ENCODE measurements at regions of chr4 and their contacts with region 1.

Region 1: DNA sequence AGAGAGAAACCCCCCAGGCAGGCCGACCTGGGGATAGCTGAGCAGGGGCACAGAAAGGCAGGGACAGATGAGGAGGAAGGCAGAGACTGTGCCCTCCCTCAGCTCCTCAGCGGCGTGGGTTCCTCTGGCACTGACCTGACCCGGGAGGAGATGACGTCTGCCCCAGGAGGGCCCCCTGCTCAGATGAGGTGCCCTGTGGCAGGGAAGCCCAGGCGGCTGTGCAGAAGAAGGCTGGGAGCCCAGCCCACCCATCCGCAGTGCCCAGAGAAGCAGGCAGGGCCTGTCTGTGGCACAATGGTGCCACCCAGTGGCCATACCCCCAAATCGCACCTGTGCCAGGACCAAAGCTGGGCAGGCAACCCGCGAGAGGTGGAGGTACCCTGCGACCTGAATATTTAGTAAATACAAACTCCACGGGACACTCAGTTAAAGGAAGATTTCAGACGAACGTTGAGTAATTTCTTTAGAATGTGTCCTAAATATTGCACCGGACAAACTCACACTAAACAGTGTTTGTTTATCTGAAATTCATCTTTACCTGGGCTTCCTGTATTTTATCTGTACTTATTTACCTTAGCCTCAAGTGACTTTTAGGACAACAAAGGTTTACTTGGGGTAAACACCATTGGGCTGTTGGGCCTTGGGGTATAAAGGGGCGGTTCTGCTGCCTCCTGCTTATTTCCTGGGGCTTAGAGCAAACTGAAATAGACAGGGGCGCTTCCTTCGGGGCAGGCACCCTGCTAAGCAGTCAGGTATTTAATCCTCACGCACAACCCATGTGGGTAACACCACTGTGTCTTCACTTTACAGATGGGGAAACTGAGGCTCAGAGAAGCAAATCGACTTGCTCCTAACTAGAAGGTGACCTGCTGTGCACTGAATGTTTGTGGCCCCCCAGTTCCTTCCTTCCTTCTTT is 46.5 kb upstream of the HMX1 start:
- DNase-seq: peak; percentile 19
- H3K4me3 ChIP-seq: no peak overlapping the region
- H3K27ac ChIP-seq: no peak overlapping the region
- H3K4me1 ChIP-seq: no peaks in the 10 kb centered on the region
- H3K27me3 ChIP-seq: no peaks in the 10 kb centered on the region
- CTCF ChIP-seq: peak; percentile 68 to 91

Region 2: DNA sequence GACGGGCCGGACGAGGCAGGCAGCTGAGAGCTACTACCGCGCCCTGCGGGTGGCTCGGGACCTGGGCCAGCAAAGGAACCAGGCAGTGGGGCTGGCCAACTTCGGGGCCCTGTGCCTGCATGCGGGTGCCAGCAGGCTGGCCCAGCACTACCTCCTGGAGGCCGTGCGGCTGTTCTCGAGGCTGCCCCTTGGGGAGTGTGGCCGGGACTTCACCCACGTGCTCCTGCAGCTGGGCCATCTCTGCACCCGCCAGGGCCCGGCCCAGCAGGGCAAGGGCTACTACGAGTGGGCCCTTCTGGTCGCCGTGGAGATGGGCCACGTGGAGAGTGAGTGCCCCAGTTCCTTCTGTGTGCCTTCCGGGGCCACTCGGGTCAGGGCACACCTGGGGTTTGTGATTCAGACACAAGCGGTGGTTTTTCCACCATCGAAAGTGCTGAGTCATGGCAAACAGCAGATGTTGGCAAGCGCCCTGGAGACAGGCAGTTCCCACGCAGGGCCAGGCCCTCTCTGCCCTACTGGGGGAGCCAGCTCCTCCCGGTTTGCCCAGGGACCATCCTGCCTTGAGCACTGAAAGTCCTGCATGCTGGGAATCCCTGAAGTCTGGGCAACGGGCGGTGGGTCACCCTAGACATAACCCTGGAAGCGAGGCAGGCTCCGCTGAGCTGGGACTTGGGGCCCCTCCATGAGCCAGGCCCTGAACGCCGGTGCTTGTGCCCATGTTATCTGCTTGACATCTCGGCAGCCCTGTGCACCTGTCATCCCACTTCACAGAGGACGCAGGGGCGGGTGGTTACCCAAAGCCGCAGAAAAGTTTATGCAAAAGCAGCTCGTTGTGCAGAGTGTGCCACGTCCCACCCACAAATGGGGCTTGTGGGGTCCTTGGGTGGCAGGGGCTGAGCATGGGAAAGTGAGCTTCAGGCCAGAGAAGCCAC is 689.5 kb before region 1 on chr4:
- CTCF ChIA-PET with region 1: no interaction called
- dilution Hi-C with region 1: no loop called
- in situ Hi-C with region 1: no loop called
- intact Hi-C with region 1: no loop called
- DNase-seq: peak; percentile 95
- H3K4me3 ChIP-seq: no peak overlapping the region
- H3K27ac ChIP-seq: peak overlapping the region; percentile 54
- H3K4me1 ChIP-seq: peaks cover 19% of the 10 kb centered on the region
- H3K27me3 ChIP-seq: no peaks in the 10 kb centered on the region
- CTCF ChIP-seq: peak in 1 of 2 donors; percentile 7

Region 3: DNA sequence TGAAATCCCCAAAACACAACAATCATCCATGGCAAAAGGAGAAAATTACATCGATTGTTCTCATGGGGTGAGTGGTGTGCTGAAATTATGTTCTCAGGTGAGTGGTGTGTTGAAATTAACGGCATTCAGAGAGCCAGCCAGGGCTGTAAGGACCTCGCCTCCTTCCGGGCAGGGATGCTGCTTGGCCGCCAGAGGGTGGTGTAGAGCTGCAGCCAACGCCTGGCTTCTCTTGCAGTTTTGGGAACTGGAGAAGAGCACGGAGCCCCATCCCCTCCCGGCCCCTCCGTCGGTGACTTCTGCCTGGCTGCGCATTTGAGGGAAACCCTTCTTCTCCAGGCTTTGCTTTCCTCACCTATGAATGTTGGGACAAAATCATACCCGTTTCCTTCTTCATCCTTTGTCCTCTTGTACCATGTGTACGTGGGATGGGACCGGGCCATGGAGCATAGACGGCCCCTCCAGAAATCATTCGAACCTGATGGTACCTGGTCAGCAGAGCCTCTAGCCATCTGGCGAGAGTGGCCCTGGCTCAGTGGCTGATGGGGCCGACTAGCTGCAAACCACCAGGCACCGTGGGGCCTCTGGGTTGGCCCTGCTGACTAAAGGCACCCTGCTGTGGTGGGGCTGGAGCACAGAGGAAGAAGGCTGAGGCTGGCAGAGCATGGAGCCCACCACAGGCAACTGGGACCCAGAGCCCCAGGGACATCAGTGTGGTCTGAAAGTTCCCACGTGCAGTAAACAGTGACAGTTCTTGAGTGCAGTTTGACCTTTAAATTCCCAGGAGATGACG is 449.2 kb before region 1 on chr4:
- CTCF ChIA-PET with region 1: no interaction called
- dilution Hi-C with region 1: no loop called
- in situ Hi-C with region 1: loop called in 1 of 2 experiments (anchors 25 kb)
- intact Hi-C with region 1: loop called (anchors 5 kb)
- DNase-seq: peak; percentile 39
- H3K4me3 ChIP-seq: no peak overlapping the region
- H3K27ac ChIP-seq: no peak overlapping the region
- H3K4me1 ChIP-seq: no peaks in the 10 kb centered on the region
- H3K27me3 ChIP-seq: no peaks in the 10 kb centered on the region
- CTCF ChIP-seq: peak; percentile 95 to 98

Region 4: GRCh38 chr4:8571702-8572596 is 346.2 kb before region 1 on chr4:
- CTCF ChIA-PET with region 1: no interaction called
- dilution Hi-C with region 1: loop called (anchors 10 kb)
- in situ Hi-C with region 1: no loop called
- intact Hi-C with region 1: no loop called
- DNase-seq: no peak
- H3K4me3 ChIP-seq: no peak overlapping the region
- H3K27ac ChIP-seq: no peak overlapping the region
- H3K4me1 ChIP-seq: no peaks in the 10 kb centered on the region
- H3K27me3 ChIP-seq: no peaks in the 10 kb centered on the region
- CTCF ChIP-seq: no peak

Region 5: DNA sequence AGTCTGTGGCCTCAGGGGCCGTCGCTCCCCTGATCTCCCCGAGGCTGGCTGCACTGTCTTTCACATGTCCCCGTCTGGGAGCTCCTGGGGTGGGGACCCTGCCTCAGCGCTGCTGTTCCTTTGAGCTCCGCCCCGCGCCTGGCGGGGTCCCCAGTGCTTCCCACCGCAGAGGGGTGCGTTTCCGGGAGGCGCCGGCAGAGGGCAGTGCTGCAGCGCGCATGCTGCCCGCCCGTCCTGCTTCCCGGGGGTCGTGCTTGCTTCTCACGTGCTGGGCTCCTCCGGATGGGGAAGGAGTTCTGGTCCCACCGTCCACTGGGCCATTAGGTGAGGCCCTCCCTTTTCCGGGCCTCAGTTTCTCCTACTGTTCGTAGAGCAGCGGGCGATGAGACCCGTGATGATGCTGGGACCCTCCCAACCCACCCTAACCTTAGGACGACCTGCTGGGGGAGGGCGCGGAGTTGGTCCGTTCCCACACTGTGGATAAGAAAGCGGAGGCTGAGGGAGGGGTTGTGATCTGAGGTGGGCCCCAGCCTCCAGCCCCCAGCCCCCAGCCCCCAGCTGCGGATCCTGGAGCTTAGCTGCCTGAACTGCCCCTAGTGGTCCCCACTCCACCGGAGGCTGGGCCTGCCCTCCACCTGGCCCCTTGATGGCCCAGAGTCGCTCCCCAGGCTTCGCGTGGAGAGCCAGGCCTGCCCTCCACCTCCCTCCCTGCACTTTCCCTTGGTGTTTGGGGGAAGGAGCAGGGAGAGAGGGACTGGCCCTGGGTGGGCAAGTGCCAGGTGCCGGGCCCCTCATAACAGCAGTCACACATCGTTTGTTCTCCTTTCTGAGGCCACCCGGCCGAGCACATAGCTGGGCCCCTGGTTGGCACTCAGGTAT is 310.3 kb before region 1 on chr4:
- CTCF ChIA-PET with region 1: no interaction called
- dilution Hi-C with region 1: no loop called
- in situ Hi-C with region 1: loop called (anchors 10 to 25 kb)
- intact Hi-C with region 1: loop called (anchors 1 kb)
- DNase-seq: no peak
- H3K4me3 ChIP-seq: no peak overlapping the region
- H3K27ac ChIP-seq: no peak overlapping the region
- H3K4me1 ChIP-seq: no peaks in the 10 kb centered on the region
- H3K27me3 ChIP-seq: no peaks in the 10 kb centered on the region
- CTCF ChIP-seq: peak; percentile 53 to 91

Measured in mammary epithelial cell (primary cell).